Activated T-helper 1 cell treated with anti-CD3 and anti-CD28 coated beads, Interleukin-12 subunit alpha, Interleukin-12 subunit beta, Interleukin-2, Interleukin-4 antibody, amounts not matched to agents 30 ng/mL and 10 ng/mL and 1 ng/mL, durations not matched to agents 14 hours and 24 hours and 36 hours (primary cell): ENCODE measurements at regions of chr7 and their contacts with region 1.

Region 1: DNA sequence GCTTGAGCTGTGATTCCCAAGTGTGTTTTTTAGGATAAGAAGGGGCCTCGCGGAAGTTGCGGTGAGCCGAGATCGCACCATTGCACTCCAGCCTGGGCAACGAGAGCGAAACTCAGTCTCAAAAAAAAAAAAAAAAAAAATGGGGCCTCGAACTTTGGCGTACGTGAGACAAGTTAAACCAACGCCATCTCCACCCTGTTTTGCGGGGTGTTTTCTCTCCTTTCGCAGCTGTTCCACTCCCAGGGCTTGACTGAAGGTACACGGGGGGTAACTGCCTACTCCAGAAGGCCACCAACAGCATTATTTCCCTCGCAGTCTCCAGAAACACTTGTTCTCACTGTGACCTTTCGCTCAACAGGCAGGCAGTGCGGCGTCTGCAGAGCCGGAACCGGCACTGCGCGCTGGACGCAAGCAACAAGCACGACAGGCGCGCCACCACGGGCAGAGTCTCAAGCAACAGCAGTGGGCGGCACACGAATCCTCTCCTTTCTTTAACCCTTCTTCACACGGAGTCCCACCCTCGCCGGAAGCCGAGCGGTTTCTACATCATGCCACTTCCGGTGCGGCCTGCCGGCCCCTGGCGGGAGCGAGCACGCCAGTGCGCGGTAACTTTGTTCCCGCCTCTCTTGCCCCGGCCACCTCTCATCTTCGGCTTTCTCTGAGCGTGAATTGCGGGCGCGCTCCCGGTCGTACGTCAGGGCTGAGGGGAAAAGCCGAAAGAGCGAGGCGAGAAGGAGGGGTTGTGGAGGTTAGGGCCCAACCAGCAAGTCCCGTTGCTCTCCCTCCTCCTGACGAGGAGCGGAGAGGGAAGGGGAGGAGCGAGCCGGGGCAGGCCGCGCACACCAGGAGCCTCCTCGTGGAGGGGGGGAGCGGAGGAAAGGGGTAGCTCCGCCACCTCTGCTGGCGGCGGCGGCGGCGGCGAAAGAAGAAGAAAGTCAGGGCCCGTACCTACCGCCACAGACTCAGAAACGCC is 814 bp upstream of the CDK13 start:
- DNase-seq: peak; percentile 98
- H3K4me3 Mint-ChIP-seq: peak overlapping the region; percentile 95
- H3K27ac Mint-ChIP-seq: peak overlapping the region; percentile 99
- H3K4me1 Mint-ChIP-seq: peaks cover 48% of the 10 kb centered on the region
- H3K27me3 Mint-ChIP-seq: peaks cover 6% of the 10 kb centered on the region

Region 2: GRCh38 chr7:38448054-38448453 is 1501.2 kb before region 1 on chr7:
- intact Hi-C with region 1: loop called (anchors 10 kb)
- DNase-seq: no peak
- H3K4me3 Mint-ChIP-seq: no peak overlapping the region
- H3K27ac Mint-ChIP-seq: no peak overlapping the region
- H3K4me1 Mint-ChIP-seq: no peaks in the 10 kb centered on the region
- H3K27me3 Mint-ChIP-seq: peaks cover 14% of the 10 kb centered on the region

Region 3: DNA sequence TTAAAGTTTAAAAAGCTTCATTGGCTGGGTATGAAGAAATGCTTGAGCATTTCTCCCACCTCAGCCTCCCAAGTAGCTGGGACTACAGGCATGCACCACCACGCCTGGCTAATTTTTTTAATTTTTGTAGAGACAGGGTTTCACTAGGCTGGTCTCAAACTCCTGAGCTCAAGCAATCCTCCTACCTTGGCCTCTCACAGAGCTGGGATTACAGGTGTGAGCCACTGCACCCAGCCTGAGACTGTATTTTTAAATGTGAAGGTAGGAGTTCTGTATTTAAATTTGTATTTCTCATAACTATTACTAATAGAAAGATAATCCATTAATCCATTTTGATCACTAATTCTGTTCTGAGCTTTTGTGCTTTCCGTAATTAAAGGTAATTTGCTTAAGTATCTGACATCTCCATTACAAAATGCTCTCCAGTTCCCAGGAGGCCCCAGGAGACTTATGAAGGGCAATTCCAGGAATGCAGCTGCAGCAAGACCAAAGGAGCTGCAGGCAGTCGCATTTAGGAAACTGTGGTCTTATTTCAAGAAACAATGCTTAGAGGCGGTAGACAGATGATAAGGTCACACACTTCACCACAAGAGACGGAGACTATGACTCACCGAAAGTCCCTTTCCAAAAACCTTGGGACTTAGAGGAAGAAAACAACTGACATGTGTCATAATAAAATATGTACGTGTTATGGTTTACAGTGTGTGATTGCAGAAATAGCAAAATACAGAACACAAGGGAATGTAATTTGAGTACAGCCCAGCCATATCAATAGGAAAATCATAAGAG is 359.7 kb before region 1 on chr7:
- intact Hi-C with region 1: loop called (anchors 2 kb)
- DNase-seq: peak; percentile 77
- H3K4me3 Mint-ChIP-seq: peak overlapping the region; percentile 63
- H3K27ac Mint-ChIP-seq: peak overlapping the region; percentile 80
- H3K4me1 Mint-ChIP-seq: peaks cover 69% of the 10 kb centered on the region
- H3K27me3 Mint-ChIP-seq: no peaks in the 10 kb centered on the region

Region 4: DNA sequence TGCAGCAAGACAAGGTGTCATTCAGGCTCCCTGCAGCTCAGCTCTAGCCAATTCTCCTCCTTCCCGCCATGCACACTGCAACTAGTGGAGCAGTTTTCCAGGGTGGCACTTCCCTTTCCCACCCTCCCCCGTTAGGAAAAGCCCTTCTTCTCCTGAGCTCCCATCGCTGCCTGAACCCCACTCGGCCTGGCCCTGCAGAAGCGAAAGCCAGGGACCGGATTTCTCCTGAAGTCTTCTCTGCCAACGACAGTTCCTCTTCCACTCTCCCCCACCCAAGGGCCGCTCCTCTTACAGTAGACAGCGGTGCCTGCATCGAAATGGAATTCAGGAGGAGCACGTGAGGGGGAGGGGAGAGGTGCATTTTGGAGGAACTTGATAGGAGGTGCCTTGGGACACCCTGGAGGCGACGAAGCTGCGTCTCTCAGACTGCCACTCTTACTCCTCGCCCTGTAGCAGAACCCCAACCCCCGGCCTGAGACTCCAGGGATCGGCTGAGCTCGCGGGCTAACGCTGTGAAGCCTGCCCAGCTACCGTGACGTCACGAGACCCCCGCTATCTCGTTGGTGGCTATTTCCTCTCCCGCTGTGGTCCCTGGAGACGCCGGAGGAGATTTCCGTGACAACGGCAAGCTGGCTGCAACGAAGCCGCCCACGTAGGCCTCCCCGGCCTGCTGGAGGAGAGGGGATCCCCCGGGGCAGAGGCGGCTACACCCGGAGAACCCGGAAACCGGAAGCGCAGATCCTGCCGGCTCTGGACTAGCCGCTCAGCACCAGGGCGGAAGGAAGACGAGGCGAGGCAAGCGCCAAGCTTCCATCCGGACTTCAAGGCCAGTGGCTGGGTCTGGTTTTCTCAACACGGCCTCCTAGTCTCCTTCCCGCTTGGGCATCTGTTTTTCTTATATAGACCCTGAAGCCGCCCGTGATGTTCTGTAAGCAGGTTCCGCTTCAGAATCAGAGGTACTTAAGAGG is 216.1 kb before region 1 on chr7:
- intact Hi-C with region 1: loop called (anchors 1 kb)
- DNase-seq: peak; percentile 97
- H3K4me3 Mint-ChIP-seq: peak overlapping the region; percentile 86
- H3K27ac Mint-ChIP-seq: peak overlapping the region; percentile 95
- H3K4me1 Mint-ChIP-seq: peaks cover 46% of the 10 kb centered on the region
- H3K27me3 Mint-ChIP-seq: peaks cover 6% of the 10 kb centered on the region

Region 5: GRCh38 chr7:39754326-39755120 is 194.7 kb before region 1 on chr7:
- intact Hi-C with region 1: no loop called
- DNase-seq: no peak
- H3K4me3 Mint-ChIP-seq: peak overlapping the region; percentile 28
- H3K27ac Mint-ChIP-seq: peak overlapping the region; percentile 80
- H3K4me1 Mint-ChIP-seq: peaks cover 12% of the 10 kb centered on the region
- H3K27me3 Mint-ChIP-seq: no peaks in the 10 kb centered on the region

Region 6: DNA sequence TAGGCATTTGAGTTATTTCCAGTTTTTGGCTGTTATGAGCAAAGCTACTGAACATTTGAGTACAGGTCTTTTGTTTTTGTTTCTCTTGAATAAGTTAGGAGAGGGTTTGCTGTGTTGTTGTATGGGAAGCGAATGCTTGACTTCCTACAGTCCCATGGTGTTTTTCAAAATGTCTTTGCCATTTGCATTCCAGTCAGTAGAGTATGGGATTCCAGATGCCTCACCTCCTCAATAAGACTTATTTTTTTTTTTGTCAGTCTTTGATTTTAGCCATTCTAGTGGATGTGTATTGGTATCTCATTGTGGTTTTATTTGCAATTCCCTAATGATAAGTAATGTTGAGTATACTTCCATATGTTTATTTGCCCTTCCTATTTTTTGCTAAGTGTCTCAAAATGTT is 20.2 kb after region 1 on chr7:
- intact Hi-C with region 1: no loop called
- DNase-seq: no peak
- H3K4me3 Mint-ChIP-seq: no peak overlapping the region
- H3K27ac Mint-ChIP-seq: no peak overlapping the region
- H3K4me1 Mint-ChIP-seq: peaks cover 27% of the 10 kb centered on the region
- H3K27me3 Mint-ChIP-seq: no peaks in the 10 kb centered on the region

Region 7: DNA sequence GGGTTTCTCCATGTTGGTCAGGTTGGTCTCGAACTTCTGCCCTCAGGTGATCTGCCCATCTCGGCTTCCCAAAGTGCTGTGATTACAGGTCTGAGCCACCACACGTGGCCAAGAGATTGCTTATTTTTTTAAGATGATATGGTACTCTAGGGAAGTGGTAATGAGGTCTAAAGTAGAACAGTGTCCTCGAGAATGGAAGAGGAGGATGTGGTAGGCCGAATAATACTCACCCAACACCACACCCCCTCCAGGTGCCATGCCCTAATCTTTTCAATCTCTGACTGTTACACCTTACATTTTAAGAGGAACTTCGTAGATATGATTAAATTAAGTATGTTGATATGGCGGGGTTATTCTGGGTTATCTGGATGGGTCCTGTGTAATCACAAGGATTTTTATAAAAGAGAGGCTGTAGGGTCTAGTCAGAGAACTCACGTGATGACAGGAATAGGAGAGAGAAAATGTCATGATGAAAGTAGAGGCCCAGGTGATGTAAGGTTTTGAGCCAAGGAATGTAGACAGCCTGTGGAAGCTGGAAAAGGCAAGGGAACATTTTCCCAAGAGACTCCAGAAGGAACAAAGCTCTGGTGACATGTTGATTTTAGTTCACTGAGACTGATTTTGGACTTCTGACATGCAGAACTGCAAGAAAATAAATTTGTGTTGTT is 30.3 kb after region 1 on chr7:
- intact Hi-C with region 1: loop called (anchors 2 kb)
- DNase-seq: no peak
- H3K4me3 Mint-ChIP-seq: no peak overlapping the region
- H3K27ac Mint-ChIP-seq: no peak overlapping the region
- H3K4me1 Mint-ChIP-seq: peaks cover 4% of the 10 kb centered on the region
- H3K27me3 Mint-ChIP-seq: no peaks in the 10 kb centered on the region

Region 8: GRCh38 chr7:40015790-40016296 is 66.6 kb after region 1 on chr7:
- intact Hi-C with region 1: no loop called
- DNase-seq: no peak
- H3K4me3 Mint-ChIP-seq: no peak overlapping the region
- H3K27ac Mint-ChIP-seq: peak overlapping the region; percentile 52
- H3K4me1 Mint-ChIP-seq: peaks cover 18% of the 10 kb centered on the region
- H3K27me3 Mint-ChIP-seq: no peaks in the 10 kb centered on the region

Region 9: DNA sequence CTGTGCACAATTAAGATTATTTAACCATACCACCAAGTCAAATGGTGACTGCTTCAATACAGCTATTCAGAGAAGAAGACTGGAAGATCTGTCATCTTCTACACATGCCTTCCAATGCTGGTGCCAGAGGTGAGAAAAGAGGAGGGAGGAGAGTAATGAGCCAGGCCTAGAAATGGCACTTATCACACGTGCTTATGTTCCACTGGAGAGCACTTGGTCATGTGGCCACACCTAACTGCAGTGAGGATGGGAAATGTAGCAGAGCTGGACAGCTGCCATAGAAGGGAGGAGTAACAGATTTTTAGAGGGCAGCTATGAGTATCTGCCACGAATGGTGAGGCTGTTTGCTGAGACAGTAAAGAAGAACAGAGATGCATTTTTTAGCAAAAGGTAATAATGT is 108.0 kb after region 1 on chr7:
- intact Hi-C with region 1: loop called (anchors 1 kb)
- DNase-seq: no peak
- H3K4me3 Mint-ChIP-seq: no peak overlapping the region
- H3K27ac Mint-ChIP-seq: no peak overlapping the region
- H3K4me1 Mint-ChIP-seq: peaks cover 4% of the 10 kb centered on the region
- H3K27me3 Mint-ChIP-seq: no peaks in the 10 kb centered on the region

Region 10: GRCh38 chr7:40186586-40186985 is 237.3 kb after region 1 on chr7:
- intact Hi-C with region 1: no loop called
- DNase-seq: no peak
- H3K4me3 Mint-ChIP-seq: no peak overlapping the region
- H3K27ac Mint-ChIP-seq: no peak overlapping the region
- H3K4me1 Mint-ChIP-seq: no peaks in the 10 kb centered on the region
- H3K27me3 Mint-ChIP-seq: no peaks in the 10 kb centered on the region